Activated CD4-positive, alpha-beta T cell treated with anti-CD3 and anti-CD28 coated beads for 36 hours (primary cell): ENCODE measurements at regions of chr19 and their contacts with region 1.

Region 1: GRCh38 chr19:11798391-11799330 is at the start of gene ZNF491:
- DNase-seq: peak; percentile 95
- ATAC-seq: peak; percentile 99
- H3K4me3 Mint-ChIP-seq: peak within 1 kb of the TSS; percentile 73
- H3K27ac Mint-ChIP-seq: peak within 1 kb of the TSS; percentile 13
- H3K4me1 Mint-ChIP-seq: peaks cover 12% of the 10 kb centered on the region
- H3K27me3 Mint-ChIP-seq: no peaks in the 10 kb centered on the region
- total RNA-seq, gene ZNF491: 0.60 to 1.2 TPM

Region 2: DNA sequence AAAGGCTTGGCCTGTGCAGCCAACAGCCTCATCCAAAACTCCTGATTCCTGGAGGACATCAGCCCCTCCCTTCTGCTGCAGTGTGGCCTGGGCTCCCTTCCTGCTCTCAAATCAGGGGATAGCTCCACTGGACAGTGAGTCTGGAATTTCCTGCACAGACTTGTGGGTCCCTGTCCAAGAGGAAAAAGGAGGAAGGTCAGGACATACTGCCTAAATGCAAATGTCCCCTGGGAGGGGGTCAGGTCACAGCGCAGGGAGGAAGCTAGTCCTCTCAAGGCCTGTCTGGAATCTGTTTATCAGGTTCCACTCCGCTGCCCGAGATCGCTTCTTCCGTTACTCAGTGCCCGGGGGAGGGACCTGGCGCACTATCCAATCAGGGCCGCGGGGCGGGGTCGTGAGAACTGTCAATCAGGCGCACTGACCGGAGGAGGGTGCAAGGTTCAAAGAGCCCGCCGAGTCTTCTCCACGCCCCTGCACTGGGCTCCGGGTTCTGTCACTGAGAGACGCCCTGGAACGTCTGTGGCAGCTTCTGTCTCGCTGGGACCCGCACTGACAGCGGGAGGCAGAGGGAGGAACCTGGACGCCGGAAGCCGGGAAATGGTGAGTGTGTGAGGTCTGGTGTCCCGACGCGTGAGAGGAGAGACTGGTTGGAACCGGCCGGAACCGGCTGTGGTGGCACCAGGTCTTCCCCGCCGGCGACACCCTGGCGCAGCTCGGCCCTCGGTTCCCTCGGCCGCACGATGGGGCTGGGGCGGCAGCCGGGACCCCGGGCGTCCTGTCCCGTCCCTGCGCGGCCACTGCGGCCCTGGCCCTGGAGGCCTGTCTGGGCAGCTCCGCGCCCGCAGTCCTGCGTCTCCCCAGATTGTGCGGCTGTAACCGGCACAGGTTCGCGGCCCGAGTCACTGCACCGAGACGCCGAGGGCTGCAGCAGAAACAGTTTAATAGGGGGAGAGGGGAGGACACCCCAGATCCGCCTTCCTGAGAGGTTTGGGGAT is 31.8 kb before region 1 on chr19 and contains the start of gene ZNF441:
- CTCF ChIA-PET with region 1: interaction called, 4 read pairs
- POLR2A ChIA-PET with region 1: no interaction called
- intact Hi-C with region 1: loop called in 1 of 2 experiments (anchors 1 kb)
- DNase-seq: peak; percentile 98
- ATAC-seq: peak; percentile 99
- H3K4me3 Mint-ChIP-seq: peak within 1 kb of the TSS; percentile 88
- H3K27ac Mint-ChIP-seq: peak within 1 kb of the TSS; percentile 95
- H3K4me1 Mint-ChIP-seq: peaks cover 13% of the 10 kb centered on the region
- H3K27me3 Mint-ChIP-seq: peaks cover 12% of the 10 kb centered on the region
- total RNA-seq, gene ZNF441: 4.3 to 5.0 TPM

Region 3: GRCh38 chr19:11848594-11849469 is 50.2 kb after region 1 on chr19 and contains the start of gene ZNF439:
- CTCF ChIA-PET with region 1: interaction called, 10 read pairs
- POLR2A ChIA-PET with region 1: no interaction called
- intact Hi-C with region 1: loop called in 1 of 2 experiments (anchors 1 kb)
- DNase-seq: peak; percentile 96
- ATAC-seq: peak; percentile 100
- H3K4me3 Mint-ChIP-seq: peak within 1 kb of the TSS; percentile 80
- H3K27ac Mint-ChIP-seq: peak within 1 kb of the TSS; percentile 85
- H3K4me1 Mint-ChIP-seq: peaks cover 23% of the 10 kb centered on the region
- H3K27me3 Mint-ChIP-seq: no peaks in the 10 kb centered on the region
- total RNA-seq, gene ZNF439: 10.4 to 11.4 TPM

Region 4: GRCh38 chr19:11881151-11881800 is 82.6 kb after region 1 on chr19:
- CTCF ChIA-PET with region 1: interaction called, 20 read pairs
- POLR2A ChIA-PET with region 1: interaction called, 6 read pairs
- intact Hi-C with region 1: loop called (anchors 1 to 2 kb)
- DNase-seq: peak; percentile 75
- ATAC-seq: peak; percentile 77
- H3K4me3 Mint-ChIP-seq: no peak overlapping the region
- H3K27ac Mint-ChIP-seq: no peak overlapping the region
- H3K4me1 Mint-ChIP-seq: no peaks in the 10 kb centered on the region
- H3K27me3 Mint-ChIP-seq: no peaks in the 10 kb centered on the region

Region 5: DNA sequence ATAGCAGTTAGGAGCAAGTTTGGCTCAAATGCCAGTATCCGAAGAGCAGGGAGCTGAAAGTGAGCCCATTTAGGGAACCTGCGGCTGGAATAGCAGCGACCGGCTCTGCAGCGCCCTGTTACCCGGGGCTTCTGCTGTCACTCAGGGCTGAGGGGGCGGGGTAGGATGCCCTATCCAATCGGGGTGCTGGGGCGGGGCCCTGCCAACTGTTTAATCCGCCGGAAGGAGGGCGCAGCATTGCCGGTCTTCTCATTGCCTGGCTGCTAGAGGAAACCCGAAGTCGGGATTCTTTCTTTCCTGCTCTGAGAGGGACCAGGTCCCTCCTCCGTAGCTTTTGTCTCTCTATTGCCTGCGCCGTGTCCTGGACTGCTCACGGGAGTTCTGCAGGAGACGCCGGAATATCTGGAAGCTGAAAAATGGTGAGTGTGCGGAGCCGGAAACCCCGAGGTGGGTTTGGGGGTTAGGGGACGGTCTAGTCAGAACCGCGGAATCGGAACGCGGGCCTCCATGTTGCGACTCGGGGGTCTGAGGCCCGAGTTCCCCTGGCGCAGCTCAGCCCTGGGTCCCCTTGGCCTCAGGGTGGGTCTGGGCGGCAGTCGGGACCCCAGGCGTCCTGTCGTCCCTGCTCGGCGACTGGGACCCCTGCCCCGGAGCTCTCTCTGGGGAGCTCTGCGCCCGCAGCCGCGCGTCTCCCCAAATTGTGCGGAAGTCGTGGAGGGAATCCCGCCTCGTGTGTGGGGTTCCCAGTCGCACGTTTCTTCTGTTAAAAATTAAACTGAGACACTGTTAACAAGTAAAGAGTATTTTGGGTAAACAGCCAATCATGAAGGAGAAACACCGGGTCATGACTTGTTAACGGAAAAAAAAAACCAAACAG is 189.0 kb after region 1 on chr19:
- CTCF ChIA-PET with region 1: interaction called, 34 read pairs
- POLR2A ChIA-PET with region 1: interaction called, 3 read pairs
- intact Hi-C with region 1: loop called (anchors 1 kb)
- DNase-seq: peak; percentile 98
- ATAC-seq: peak; percentile 98
- H3K4me3 Mint-ChIP-seq: peak overlapping the region; percentile 86
- H3K27ac Mint-ChIP-seq: peak overlapping the region; percentile 92
- H3K4me1 Mint-ChIP-seq: peaks cover 18% of the 10 kb centered on the region
- H3K27me3 Mint-ChIP-seq: no peaks in the 10 kb centered on the region

Region 6: GRCh38 chr19:12139885-12140547 is 341.4 kb after region 1 on chr19 and contains the start of gene ZNF20:
- CTCF ChIA-PET with region 1: interaction called, 10 read pairs
- POLR2A ChIA-PET with region 1: no interaction called
- intact Hi-C with region 1: loop called (anchors 1 kb)
- DNase-seq: peak; percentile 95
- ATAC-seq: peak; percentile 93
- H3K4me3 Mint-ChIP-seq: peak within 1 kb of the TSS; percentile 91
- H3K27ac Mint-ChIP-seq: peak within 1 kb of the TSS; percentile 73
- H3K4me1 Mint-ChIP-seq: peaks cover 32% of the 10 kb centered on the region
- H3K27me3 Mint-ChIP-seq: no peaks in the 10 kb centered on the region
- total RNA-seq, gene ZNF20: 3.2 to 3.3 TPM